ENCODE measurements at regions of chr15 and their contacts with region 1.

Region 1: GRCh38 chr15:61871926-61872522 is 188.2 kb downstream of the VPS13C start:
- DNase-seq: no peak
- H3K4me3 ChIP-seq: no peak overlapping the region
- H3K27ac ChIP-seq: no peak overlapping the region
- H3K4me1 ChIP-seq: no peaks in the 10 kb centered on the region
- H3K27me3 ChIP-seq: no peaks in the 10 kb centered on the region
- CTCF ChIP-seq: peak; percentile 52

Region 2: GRCh38 chr15:61923173-61923572 is 51.1 kb after region 1 on chr15:
- intact Hi-C with region 1: no loop called
- DNase-seq: no peak
- H3K4me3 ChIP-seq: no peak overlapping the region
- H3K27ac ChIP-seq: no peak overlapping the region
- H3K4me1 ChIP-seq: no peaks in the 10 kb centered on the region
- H3K27me3 ChIP-seq: no peaks in the 10 kb centered on the region
- CTCF ChIP-seq: no peak

Region 3: GRCh38 chr15:62071711-62072308 is 199.8 kb after region 1 on chr15:
- intact Hi-C with region 1: loop called (anchors 10 kb)
- DNase-seq: no peak
- H3K4me3 ChIP-seq: no peak overlapping the region
- H3K27ac ChIP-seq: no peak overlapping the region
- H3K4me1 ChIP-seq: peaks cover 7% of the 10 kb centered on the region
- H3K27me3 ChIP-seq: no peaks in the 10 kb centered on the region
- CTCF ChIP-seq: peak; percentile 65

Region 4: DNA sequence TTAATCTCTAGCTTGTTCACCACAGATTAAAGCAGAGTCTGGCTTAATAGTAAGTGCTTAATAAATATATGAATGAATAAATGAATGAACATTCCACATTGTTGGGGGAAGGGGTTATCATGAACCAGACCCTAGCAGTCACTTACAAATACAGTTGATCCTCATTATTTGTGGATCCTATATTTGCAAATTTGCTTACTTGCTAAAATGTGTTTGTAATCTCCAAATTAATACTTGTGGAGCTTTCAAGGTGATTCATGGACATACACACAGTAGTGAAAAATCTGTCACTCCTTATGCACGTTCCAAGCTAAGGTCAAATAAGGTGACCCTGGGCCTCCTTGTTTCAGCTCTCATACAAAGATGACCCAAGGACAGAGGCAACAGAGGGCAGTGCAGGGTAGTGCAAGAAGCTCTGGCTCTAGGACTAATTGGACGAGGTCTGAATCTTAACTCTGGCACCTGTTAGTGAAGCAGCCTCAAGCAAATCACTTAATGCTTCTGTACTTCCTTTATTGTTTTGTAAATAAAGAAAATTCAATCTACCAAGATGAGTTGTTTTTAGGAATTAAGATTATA is 405.9 kb after region 1 on chr15:
- intact Hi-C with region 1: no loop called
- DNase-seq: no peak
- H3K4me3 ChIP-seq: no peak overlapping the region
- H3K27ac ChIP-seq: no peak overlapping the region
- H3K4me1 ChIP-seq: no peaks in the 10 kb centered on the region
- H3K27me3 ChIP-seq: no peaks in the 10 kb centered on the region
- CTCF ChIP-seq: no peak

Measured in colonic mucosa (tissue), 4 donors.